Endothelial cell of umbilical vein (primary cell): ENCODE measurements at regions of chr5 and their contacts with region 1.

Region 1: GRCh38 chr5:78908173-78909061 is 76.7 kb downstream of the ARSB start:
- DNase-seq: peak; percentile 98
- H3K4me3 ChIP-seq: no peak overlapping the region
- H3K27ac ChIP-seq: peak overlapping the region; percentile 85
- H3K4me1 ChIP-seq: peaks cover 18% of the 10 kb centered on the region
- H3K27me3 ChIP-seq: no peaks in the 10 kb centered on the region
- CTCF ChIP-seq: no peak
- POLR2A ChIP-seq: no peak

Region 2: GRCh38 chr5:78972654-78973428 is 64.4 kb after region 1 on chr5:
- CTCF ChIA-PET with region 1: interaction called, 4 read pairs
- POLR2A ChIA-PET with region 1: no interaction called
- dilution Hi-C with region 1: no loop called
- intact Hi-C with region 1: loop called (anchors 2 kb)
- DNase-seq: peak; percentile 99
- H3K4me3 ChIP-seq: peak overlapping the region in 1 of 3 experiments; percentile 15
- H3K27ac ChIP-seq: peak overlapping the region; percentile 4
- H3K4me1 ChIP-seq: peaks cover 12% of the 10 kb centered on the region
- H3K27me3 ChIP-seq: no peaks in the 10 kb centered on the region
- CTCF ChIP-seq: no peak
- POLR2A ChIP-seq: no peak